Motor neuron (in vitro differentiated cells): ENCODE measurements at regions of chr3 and their contacts with region 1.

Region 1: GRCh38 chr3:113051302-113051711 is 60.5 kb downstream of the GTPBP8 start:
- ATAC-seq: peak; percentile 92 to 99 (median 94)
- H3K4me3 ChIP-seq: peak overlapping the region in 1 of 5 donors; percentile 19
- H3K27ac ChIP-seq: no peak overlapping the region
- H3K4me1 ChIP-seq: peaks cover 0 to 3% of the 10 kb centered on the region in 2 donors

Region 2: DNA sequence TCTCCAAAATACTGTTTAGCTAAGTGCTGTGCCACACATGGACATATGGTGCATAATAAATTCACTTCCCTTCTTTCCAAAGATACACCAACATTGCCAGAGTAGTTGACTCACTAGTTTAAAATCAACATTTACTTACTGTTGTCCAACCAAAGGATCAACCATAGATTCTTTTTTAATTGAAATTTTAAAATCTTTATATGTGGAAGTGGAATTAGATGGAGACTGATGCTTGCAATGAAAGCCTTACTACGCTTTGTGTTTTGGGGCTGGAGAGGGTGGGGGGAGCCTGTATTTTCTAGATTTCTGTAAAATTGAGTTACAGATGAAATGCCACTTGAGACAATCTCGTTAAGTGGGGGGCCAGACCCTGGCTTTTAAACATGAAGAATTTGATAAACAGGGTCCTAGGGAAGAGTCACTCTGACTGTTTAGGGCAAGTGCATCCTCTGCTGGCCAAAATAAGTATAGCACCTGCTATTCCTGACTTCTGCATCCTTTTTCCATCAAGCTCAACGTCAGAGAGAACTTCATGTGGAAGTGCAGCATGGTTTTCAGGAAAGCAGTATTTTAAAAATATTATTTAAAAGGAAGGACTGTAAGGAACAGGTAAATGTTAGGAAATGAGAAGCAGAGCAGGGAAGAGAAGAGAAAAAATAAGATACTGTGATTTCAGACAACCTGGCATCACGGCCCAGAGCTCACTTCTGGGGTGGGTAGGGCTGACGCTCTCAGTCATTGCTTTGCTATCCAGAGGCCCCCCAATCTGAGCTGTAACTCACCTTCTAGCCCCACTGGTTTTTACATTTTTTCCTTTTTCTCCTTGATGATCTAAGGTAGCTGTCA is 236.7 kb after region 1 on chr3:
- in situ Hi-C with region 1: loop called (anchors 10 to 25 kb)
- ATAC-seq: peak; percentile 44 to 76 (median 60)
- H3K4me3 ChIP-seq: no peak overlapping the region
- H3K27ac ChIP-seq: no peak overlapping the region
- H3K4me1 ChIP-seq: peaks cover 0 to 2% of the 10 kb centered on the region in 2 donors